Ascending aorta (tissue), 2 donors: ENCODE measurements at regions of chr11 and their contacts with region 1.

Region 1: GRCh38 chr11:33039274-33040032 is at the start of gene TCP11L1:
- DNase-seq: peak; percentile 62 to 95
- H3K4me3 ChIP-seq: peak within 1 kb of the TSS; percentile 85 to 96
- H3K27ac ChIP-seq: peak within 1 kb of the TSS; percentile 97 to 99
- H3K4me1 ChIP-seq: peaks cover 4 to 7% of the 10 kb centered on the region in 2 donors
- H3K27me3 ChIP-seq: no peaks in the 10 kb centered on the region
- CTCF ChIP-seq: no peak
- total RNA-seq, gene TCP11L1: 33.6 TPM

Region 2: DNA sequence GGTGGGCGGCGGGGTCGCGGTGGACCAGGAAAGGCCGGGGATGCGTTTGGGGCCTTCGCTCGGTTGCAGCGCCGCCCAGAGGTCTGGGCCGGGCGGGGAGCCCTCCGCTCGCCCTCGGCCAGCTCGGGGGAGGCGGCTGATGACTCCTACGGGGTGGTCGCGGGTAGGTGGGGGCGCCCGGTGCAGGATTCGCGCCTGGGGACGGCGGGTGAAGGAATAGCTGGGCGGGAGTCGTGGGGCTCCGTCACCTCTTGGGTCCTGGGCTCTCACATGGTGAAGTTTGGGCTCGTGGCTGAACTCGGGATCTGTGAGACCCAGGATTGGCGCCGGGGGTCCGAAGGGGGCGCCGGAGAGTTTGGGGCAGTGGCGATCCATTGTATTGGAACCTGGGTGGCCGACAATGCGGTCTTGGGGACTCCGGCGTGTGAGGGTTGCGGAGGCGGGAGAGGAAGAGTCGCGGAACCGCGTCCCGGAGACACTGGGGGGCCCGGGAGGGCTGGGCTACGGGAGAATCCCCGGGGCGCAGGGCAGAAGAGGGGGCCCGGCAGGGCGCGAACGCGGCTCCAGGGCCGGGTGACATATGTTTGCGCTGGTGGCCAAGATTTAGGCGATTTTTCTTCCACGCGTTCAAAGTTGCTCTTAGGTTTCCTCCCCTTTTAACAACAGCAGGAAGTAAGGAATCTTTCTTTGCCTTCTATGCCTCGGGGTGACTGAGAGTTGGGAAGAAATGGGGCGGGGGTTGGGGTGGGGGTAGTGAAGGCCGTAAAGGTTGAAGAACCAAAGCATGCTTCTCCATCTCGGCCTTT is 145.9 kb before region 1 on chr11:
- intact Hi-C with region 1: loop called (anchors 10 kb)
- DNase-seq: peak in 1 of 2 donors; percentile 66
- H3K4me3 ChIP-seq: peak overlapping the region; percentile 84 to 85
- H3K27ac ChIP-seq: peak overlapping the region; percentile 83 to 87
- H3K4me1 ChIP-seq: no peaks in the 10 kb centered on the region
- H3K27me3 ChIP-seq: no peaks in the 10 kb centered on the region
- CTCF ChIP-seq: peak in 2 of 3 experiments; percentile 55 to 69

Region 3: GRCh38 chr11:33015621-33016551 is 23.6 kb before region 1 on chr11 and contains the start of gene DEPDC7:
- intact Hi-C with region 1: loop called (anchors 1 kb)
- DNase-seq: peak; percentile 55 to 91
- H3K4me3 ChIP-seq: peak within 1 kb of the TSS; percentile 77 to 81
- H3K27ac ChIP-seq: peak within 1 kb of the TSS in 1 of 2 donors; percentile 49
- H3K4me1 ChIP-seq: peaks cover 0 to 2% of the 10 kb centered on the region in 2 donors
- H3K27me3 ChIP-seq: no peaks in the 10 kb centered on the region
- CTCF ChIP-seq: no peak
- total RNA-seq, gene DEPDC7: not detected